Lower leg skin (tissue), 4 donors: ENCODE measurements at regions of chr12 and their contacts with region 1.

Region 1: DNA sequence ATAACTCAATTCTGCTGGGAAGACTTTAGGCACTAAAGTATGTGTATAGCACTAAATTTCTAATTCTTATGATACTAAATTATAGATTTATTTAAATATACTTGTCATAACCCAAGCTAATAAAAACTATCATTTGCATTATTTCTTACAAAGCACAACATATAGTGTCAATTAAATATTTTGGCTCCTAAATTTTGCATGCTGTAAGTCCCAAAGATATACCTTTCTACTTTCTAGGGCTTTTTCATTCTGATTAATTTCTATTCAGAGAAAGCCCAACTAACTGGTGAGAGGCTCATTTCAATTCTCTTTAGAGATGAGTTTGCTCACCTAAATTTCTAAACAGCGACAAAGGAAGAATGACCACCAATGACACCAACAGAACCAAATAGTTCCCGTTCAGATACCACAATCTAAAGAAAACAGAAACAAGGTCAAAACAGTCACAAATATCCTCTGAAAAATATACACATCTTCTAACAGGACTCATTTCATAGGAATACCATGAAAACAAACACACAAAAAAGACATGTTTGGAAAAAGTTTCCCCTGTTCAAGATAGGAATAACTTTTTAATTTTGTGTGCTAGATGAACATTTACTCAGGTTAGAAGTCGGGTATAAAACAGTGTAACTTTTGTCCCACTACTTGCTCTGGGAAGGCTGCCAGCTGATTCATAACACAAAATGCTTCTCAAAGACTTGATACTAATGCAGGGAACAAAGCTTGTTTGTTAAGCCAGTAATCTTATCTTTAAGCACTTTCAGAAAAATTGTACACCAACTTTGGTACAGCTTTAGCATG is 7.6 kb downstream of the SLC38A2 start:
- DNase-seq: no peak
- H3K4me3 ChIP-seq: no peak overlapping the region
- CTCF ChIP-seq: no peak
- POLR2A ChIP-seq: no peak

Region 2: GRCh38 chr12:46933947-46934346 is 569.0 kb after region 1 on chr12:
- intact Hi-C with region 1: loop called (anchors 5 kb)
- DNase-seq: no peak
- H3K4me3 ChIP-seq: no peak overlapping the region
- CTCF ChIP-seq: no peak
- POLR2A ChIP-seq: no peak

Region 3: DNA sequence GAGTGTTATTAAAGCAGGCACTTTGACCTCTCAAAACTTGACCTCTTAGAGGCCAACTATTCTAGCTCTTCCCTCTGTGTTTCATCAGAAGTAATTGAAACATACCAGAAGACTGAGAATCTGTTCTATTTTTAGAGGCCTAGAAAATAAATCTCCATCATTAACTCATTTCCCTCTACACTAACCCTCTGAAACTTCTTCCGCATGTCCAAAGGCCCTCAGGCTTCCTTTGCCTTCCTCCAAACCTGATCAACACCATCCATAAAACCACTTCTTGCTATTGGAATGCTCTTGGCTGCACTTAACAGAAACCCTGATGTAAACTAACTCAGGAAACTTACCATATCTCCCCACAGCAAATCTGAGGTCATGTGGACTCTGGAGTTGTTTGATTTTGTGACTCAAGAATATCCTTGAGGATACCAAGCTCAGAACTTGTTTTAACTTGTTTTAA is 1144.4 kb after region 1 on chr12:
- intact Hi-C with region 1: no loop called
- DNase-seq: no peak
- H3K4me3 ChIP-seq: no peak overlapping the region
- CTCF ChIP-seq: no peak
- POLR2A ChIP-seq: no peak